Panc1 (cell line): ENCODE measurements at regions of chr6 and their contacts with region 1.

Region 1: DNA sequence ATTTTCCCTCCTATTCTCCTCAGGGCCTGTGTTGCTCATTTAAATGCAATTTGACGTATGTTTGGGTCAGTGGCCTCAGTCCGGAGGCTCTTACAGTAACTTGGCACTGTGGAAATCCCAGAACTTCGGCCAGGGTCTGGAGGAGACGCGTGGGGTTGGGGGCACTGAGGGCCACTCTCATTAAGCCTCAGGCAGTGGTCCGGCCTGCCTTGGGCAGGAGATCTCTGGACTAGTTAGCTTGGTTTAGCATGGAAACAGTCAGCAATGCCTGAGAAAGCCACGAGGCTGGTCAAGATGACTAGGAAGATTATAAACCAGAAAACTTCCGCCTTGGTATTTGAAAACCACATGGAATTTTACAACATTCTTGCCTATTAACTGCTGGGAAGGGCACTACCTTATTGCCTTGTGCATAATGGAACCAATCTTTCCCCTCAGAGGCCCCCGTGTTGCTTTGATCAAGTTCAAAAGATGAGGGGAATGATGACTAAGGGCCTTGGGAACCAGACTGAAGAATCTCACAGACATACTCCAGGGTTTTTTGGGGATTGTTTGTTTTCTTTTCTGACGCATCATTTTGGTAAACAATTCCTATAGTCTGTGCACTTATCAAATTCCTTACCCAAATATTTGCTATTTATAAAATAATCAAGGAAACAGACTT is 206.0 kb upstream of the PREP start:
- DNase-seq: peak; percentile 85
- ATAC-seq: peak; percentile 92
- H3K4me3 ChIP-seq: no peak overlapping the region
- H3K27ac ChIP-seq: peak overlapping the region; percentile 78
- H3K4me1 ChIP-seq: peaks cover 14% of the 10 kb centered on the region
- H3K27me3 ChIP-seq: no peaks in the 10 kb centered on the region
- CTCF ChIP-seq: no peak

Region 2: DNA sequence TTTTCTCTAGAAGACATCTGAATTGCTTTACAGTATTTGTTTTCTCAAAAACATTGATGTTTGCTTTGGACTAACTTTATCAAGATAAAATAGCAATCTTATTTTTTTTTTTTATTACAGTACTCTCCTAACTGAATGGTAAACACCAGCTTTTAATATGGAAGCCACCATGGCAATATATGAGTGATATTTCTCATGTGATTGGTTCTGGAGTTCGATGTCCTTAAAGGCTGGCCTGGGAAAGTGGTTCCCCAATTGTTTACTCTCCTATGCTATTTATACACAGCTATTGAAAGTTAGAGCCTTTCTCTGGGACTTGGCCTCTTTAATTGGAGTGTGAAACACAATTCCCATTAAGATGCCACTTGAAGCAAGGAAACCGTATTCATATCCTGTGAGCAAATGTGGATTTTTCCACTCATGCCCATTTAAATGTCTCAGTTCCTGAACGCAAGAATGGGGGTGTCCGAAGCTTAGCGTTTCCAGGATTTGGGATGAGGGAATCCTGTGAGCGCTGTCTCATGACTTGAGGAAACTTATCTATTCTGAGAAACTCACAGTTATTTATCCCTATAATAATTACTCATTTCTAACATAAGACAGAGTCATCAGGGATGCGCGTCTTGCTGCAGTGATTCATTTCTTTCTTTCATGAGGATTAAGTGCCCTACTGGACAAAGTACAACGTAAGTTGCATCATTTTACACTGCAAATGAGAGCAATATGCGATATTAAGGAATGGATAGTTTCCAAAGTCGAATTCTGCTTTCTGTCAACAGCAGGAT is 62.7 kb before region 1 on chr6:
- CTCF ChIA-PET with region 1: no interaction called
- POLR2A ChIA-PET with region 1: no interaction called
- in situ Hi-C with region 1: no loop called
- intact Hi-C with region 1: no loop called
- DNase-seq: no peak
- ATAC-seq: no peak
- H3K4me3 ChIP-seq: no peak overlapping the region
- H3K27ac ChIP-seq: no peak overlapping the region; the same call in 1 of the 2 replicates
- H3K4me1 ChIP-seq: no peaks in the 10 kb centered on the region
- H3K27me3 ChIP-seq: no peaks in the 10 kb centered on the region
- CTCF ChIP-seq: no peak

Region 3: GRCh38 chr6:107390685-107391435 is 1782.0 kb after region 1 on chr6:
- CTCF ChIA-PET with region 1: no interaction called
- POLR2A ChIA-PET with region 1: interaction called, 14 read pairs
- in situ Hi-C with region 1: no loop called
- intact Hi-C with region 1: no loop called
- DNase-seq: no peak
- ATAC-seq: no peak
- H3K4me3 ChIP-seq: no peak overlapping the region
- H3K27ac ChIP-seq: no peak overlapping the region
- H3K4me1 ChIP-seq: no peaks in the 10 kb centered on the region
- H3K27me3 ChIP-seq: no peaks in the 10 kb centered on the region
- CTCF ChIP-seq: no peak